Activated T-helper 1 cell treated with anti-CD3 and anti-CD28 coated beads, Interleukin-12 subunit alpha, Interleukin-12 subunit beta, Interleukin-2, Interleukin-4 antibody, amounts not matched to agents 30 ng/mL and 10 ng/mL and 1 ng/mL, durations not matched to agents 14 hours and 24 hours and 36 hours (primary cell): ENCODE measurements at regions of chr6 and their contacts with region 1.

Region 1: GRCh38 chr6:151323791-151324487 is 67.4 kb downstream of the ZBTB2 start:
- DNase-seq: peak; percentile 56
- H3K4me3 Mint-ChIP-seq: peak overlapping the region; percentile 9
- H3K27ac Mint-ChIP-seq: no peak overlapping the region
- H3K4me1 Mint-ChIP-seq: peaks cover 19% of the 10 kb centered on the region
- H3K27me3 Mint-ChIP-seq: peaks cover 39% of the 10 kb centered on the region

Region 2: GRCh38 chr6:150891888-150892485 is 432.0 kb before region 1 on chr6:
- intact Hi-C with region 1: loop called (anchors 1 kb)
- DNase-seq: peak; percentile 45
- H3K4me3 Mint-ChIP-seq: no peak overlapping the region
- H3K27ac Mint-ChIP-seq: no peak overlapping the region
- H3K4me1 Mint-ChIP-seq: peaks cover 24% of the 10 kb centered on the region
- H3K27me3 Mint-ChIP-seq: no peaks in the 10 kb centered on the region

Region 3: GRCh38 chr6:150987371-150987828 is 336.5 kb before region 1 on chr6:
- intact Hi-C with region 1: loop called (anchors 1 kb)
- DNase-seq: peak; percentile 57
- H3K4me3 Mint-ChIP-seq: peak overlapping the region; percentile 60
- H3K27ac Mint-ChIP-seq: peak overlapping the region; percentile 96
- H3K4me1 Mint-ChIP-seq: peaks cover 28% of the 10 kb centered on the region
- H3K27me3 Mint-ChIP-seq: no peaks in the 10 kb centered on the region

Region 4: GRCh38 chr6:151014404-151015100 is 309.4 kb before region 1 on chr6:
- intact Hi-C with region 1: loop called (anchors 1 kb)
- DNase-seq: peak; percentile 37
- H3K4me3 Mint-ChIP-seq: no peak overlapping the region
- H3K27ac Mint-ChIP-seq: no peak overlapping the region
- H3K4me1 Mint-ChIP-seq: peaks cover 10% of the 10 kb centered on the region
- H3K27me3 Mint-ChIP-seq: no peaks in the 10 kb centered on the region

Region 5: GRCh38 chr6:151240036-151240685 is 83.8 kb before region 1 on chr6:
- intact Hi-C with region 1: loop called (anchors 2 kb)
- DNase-seq: no peak
- H3K4me3 Mint-ChIP-seq: peak overlapping the region; percentile 85
- H3K27ac Mint-ChIP-seq: no peak overlapping the region
- H3K4me1 Mint-ChIP-seq: no peaks in the 10 kb centered on the region
- H3K27me3 Mint-ChIP-seq: peaks cover 61% of the 10 kb centered on the region